Prostate gland (tissue), 2 donors: ENCODE measurements at regions of chr2 and their contacts with region 1.

Region 1: GRCh38 chr2:197705121-197705911 is at the start of gene MARS2:
- DNase-seq: peak; percentile 90
- H3K4me3 ChIP-seq: peak within 1 kb of the TSS; percentile 69 to 71
- H3K27ac ChIP-seq: peak within 1 kb of the TSS; percentile 66 to 69
- H3K4me1 ChIP-seq: peaks cover 9% of the 10 kb centered on the region
- H3K27me3 ChIP-seq: no peaks in the 10 kb centered on the region
- CTCF ChIP-seq: peak in 2 of 4 experiments; percentile 2 to 13
- POLR2A ChIP-seq: peak; percentile 47
- total RNA-seq, gene MARS2: 5.9 to 6.9 TPM

Region 2: DNA sequence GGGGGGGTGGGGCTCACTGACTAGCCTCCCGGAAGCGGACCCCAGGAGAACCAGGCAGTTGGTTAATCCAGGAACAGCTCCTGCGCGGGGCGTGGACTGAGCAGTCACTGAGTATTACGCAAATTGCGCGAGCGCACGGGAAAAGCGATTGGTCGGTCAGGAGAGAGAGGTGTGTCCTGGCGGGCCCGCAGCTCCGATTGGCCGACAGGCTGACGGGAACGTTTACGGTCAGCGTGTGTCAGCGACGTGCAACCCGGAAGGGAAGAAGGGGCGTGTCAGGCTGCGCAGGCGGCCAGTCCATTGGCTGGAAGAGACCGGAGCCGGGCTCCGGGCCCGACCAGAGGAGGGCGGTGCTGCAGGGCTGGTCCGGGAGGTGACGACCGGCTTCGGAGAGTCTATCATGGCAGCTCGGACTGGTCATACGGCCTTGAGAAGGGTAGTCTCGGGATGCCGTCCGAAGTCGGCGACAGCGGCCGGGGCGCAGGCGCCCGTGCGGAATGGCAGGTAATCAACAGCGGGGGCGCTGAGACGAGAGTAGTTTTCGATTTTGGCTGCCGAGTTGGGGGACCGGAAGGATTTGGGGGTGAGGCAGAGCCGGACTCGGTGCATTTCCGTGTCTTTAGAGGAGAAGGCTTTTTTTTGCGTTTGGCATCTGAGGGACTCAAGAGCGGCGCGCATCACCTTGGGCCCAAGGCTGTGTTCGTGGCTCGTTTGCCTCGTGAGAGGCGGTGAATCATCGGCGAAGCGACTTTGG is 252.0 kb before region 1 on chr2 and contains the start of gene COQ10B:
- intact Hi-C with region 1: loop called (anchors 10 kb)
- DNase-seq: peak; percentile 100
- H3K4me3 ChIP-seq: peak within 1 kb of the TSS; percentile 70 to 80
- H3K27ac ChIP-seq: peak within 1 kb of the TSS; percentile 99
- H3K4me1 ChIP-seq: peaks cover 3% of the 10 kb centered on the region
- H3K27me3 ChIP-seq: no peaks in the 10 kb centered on the region
- CTCF ChIP-seq: peak in 3 of 4 experiments; percentile 36 to 54 (median 48)
- POLR2A ChIP-seq: peak; percentile 72
- total RNA-seq, gene COQ10B: 18.7 to 20.1 TPM

Region 3: DNA sequence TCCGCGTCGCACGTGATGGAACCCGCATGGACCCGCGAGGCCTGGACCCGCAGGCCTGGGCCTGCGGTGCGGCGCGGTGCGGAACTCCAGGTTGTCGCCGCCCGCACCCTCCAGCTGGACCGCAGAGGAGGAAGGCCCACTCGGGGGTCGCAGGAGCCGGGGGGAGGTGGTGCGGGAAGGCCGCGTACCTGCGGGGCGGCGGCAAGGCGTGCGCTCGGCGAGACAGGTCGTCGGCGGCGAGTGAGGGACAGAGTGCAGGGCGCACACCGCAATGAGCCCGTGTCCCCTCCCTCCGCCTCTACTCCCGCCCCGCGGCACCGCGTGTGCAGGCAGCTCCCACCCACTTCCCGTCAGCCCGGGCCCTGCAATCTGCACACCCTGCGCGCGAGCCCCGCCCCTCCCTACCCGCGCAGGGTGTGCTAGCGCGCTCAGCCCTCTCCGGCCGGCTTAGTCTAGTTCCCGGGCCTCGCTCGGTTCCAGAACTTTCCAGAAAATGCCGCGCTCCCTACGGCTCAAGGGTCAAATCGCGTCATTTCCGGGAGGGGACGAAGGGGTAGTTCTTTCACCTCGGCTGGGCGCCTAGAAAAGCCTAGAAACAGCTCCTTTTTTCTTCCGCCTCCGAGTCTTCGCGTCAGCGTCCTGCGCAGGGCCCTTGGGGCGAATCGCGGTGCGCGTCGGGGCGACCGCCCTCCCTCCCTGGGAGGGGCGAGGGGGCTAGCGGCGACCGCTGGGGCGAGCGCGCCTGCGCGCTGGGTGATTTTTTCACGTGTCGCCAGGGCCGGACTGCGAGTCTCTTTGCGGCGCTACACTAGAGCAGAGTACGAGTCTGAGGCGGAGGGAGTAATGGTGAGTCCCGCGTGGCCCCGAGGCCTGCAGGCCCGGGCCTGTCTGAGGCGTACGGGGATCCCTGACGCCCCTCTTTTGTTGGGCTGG is 205.5 kb before region 1 on chr2 and contains the starts of genes HSPD1 and HSPE1:
- intact Hi-C with region 1: loop called (anchors 10 kb)
- DNase-seq: peak; percentile 98
- H3K4me3 ChIP-seq: peak within 1 kb of the TSS; percentile 85 to 93
- H3K27ac ChIP-seq: peak within 1 kb of the TSS; percentile 99 to 100
- H3K4me1 ChIP-seq: no peaks in the 10 kb centered on the region
- H3K27me3 ChIP-seq: no peaks in the 10 kb centered on the region
- CTCF ChIP-seq: peak in 2 of 4 experiments; percentile 18 to 47
- POLR2A ChIP-seq: peak; percentile 99
- total RNA-seq, gene HSPD1: 95.5 to 110 TPM
- total RNA-seq, gene HSPE1: 57.0 to 139 TPM

Region 4: GRCh38 chr2:197515739-197516392 is 189.4 kb before region 1 on chr2 and contains the start of gene MOB4:
- intact Hi-C with region 1: loop called (anchors 5 kb)
- DNase-seq: peak; percentile 94
- H3K4me3 ChIP-seq: peak within 1 kb of the TSS; percentile 77 to 99
- H3K27ac ChIP-seq: peak within 1 kb of the TSS; percentile 95 to 97
- H3K4me1 ChIP-seq: no peaks in the 10 kb centered on the region
- H3K27me3 ChIP-seq: no peaks in the 10 kb centered on the region
- CTCF ChIP-seq: peak in 2 of 4 experiments; percentile 40 to 41
- POLR2A ChIP-seq: peak; percentile 97
- total RNA-seq, gene MOB4: 13.7 to 23.4 TPM

Region 5: GRCh38 chr2:197777823-197778407 is 72.6 kb after region 1 on chr2:
- intact Hi-C with region 1: loop called (anchors 5 kb)
- DNase-seq: no peak
- H3K4me3 ChIP-seq: no peak overlapping the region
- H3K27ac ChIP-seq: no peak overlapping the region
- H3K4me1 ChIP-seq: no peaks in the 10 kb centered on the region
- H3K27me3 ChIP-seq: no peaks in the 10 kb centered on the region
- CTCF ChIP-seq: peak in 3 of 4 experiments; percentile 63 to 82 (median 73)
- POLR2A ChIP-seq: no peak

Region 6: DNA sequence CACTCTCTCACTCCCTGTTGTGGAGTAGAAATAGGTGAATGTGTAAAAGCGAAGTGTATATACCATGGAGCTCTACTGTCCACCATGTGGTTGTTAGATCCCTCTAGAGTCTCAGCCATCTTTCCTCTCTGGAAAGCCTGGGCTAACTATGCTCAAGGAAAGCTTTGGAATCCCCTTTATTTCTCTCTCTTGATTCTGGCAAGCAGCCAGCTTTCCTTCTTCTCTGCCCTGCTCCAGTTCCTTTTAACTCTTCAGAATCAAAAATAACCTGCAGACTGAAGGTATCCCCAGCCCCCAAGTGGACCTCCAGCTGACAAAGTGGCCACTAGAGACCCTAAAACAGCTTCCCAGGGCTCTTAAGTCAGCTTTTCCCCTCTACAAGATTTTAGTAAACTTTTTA is 480.9 kb after region 1 on chr2:
- intact Hi-C with region 1: no loop called
- DNase-seq: no peak
- H3K4me3 ChIP-seq: no peak overlapping the region
- H3K27ac ChIP-seq: no peak overlapping the region
- H3K4me1 ChIP-seq: no peaks in the 10 kb centered on the region
- H3K27me3 ChIP-seq: no peaks in the 10 kb centered on the region
- CTCF ChIP-seq: no peak
- POLR2A ChIP-seq: no peak

Region 7: GRCh38 chr2:198296665-198297308 is 591.5 kb after region 1 on chr2:
- intact Hi-C with region 1: loop called (anchors 10 kb)
- DNase-seq: peak; percentile 55
- H3K4me3 ChIP-seq: no peak overlapping the region
- H3K27ac ChIP-seq: no peak overlapping the region
- H3K4me1 ChIP-seq: no peaks in the 10 kb centered on the region
- H3K27me3 ChIP-seq: no peaks in the 10 kb centered on the region
- CTCF ChIP-seq: peak; percentile 50 to 81 (median 62)
- POLR2A ChIP-seq: no peak